CD8-positive, alpha-beta T cell (primary cell): ENCODE measurements at regions of chr1 and their contacts with region 1.

Region 1: GRCh38 chr1:40862008-40862863 is at the start of gene CITED4:
- DNase-seq: peak; percentile 93 to 97 (median 95)
- ATAC-seq: peak; percentile 97
- H3K4me3 ChIP-seq: peak within 1 kb of the TSS; percentile 63 to 78
- H3K4me3 Mint-ChIP-seq: peak within 1 kb of the TSS; percentile 95
- H3K27ac ChIP-seq: peak within 1 kb of the TSS; percentile 67 to 74
- H3K27ac Mint-ChIP-seq: peak within 1 kb of the TSS; percentile 98
- H3K4me1 ChIP-seq: peaks cover 17% of the 10 kb centered on the region
- H3K4me1 Mint-ChIP-seq: peaks cover 14% of the 10 kb centered on the region
- H3K27me3 ChIP-seq: no peaks in the 10 kb centered on the region
- H3K27me3 Mint-ChIP-seq: no peaks in the 10 kb centered on the region
- CTCF ChIP-seq: no peak
- total RNA-seq, gene CITED4: 31.4 to 34.2 TPM

Region 2: DNA sequence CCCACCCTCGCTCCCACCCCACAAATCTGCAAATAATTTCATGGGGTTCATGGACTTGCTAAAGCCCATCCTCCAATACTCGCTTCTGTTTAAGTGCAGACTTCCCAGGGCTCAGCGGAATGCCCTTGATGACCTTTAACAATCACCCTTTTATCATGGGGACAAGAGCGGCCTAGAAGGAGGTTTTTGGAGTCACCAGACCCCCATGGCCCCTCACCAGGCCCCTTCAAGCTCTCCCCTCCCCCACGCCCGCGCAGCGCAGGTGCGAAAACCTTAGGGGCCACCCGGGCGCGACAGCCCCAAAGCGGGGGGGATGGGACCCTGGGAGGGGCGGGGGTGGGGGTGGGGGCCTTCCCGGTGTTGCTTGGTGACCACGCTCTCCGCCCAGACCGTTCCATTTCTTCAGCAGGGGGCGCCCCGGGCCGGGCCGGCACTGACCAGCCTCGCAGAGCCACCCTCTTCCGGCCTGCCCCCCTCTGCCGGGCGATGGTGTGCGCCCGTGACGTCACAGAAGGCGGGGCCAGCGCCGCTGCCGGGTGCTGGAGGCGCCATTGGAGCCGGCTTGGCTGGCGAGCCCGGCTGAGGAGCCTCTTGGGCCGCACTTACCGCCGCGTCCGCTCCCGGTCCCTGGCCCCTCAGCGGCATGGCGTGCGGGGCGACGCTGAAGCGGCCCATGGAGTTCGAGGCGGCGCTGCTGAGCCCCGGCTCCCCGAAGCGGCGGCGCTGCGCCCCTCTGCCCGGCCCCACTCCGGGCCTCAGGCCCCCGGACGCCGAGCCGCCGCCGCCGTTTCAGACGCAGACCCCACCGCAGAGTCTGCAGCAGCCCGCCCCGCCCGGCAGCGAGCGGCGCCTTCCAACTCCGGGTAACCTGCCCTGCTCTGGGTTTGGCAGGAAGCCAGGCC is 1871.2 kb before region 1 on chr1 and contains the start of gene AKIRIN1:
- CTCF ChIA-PET with region 1: no interaction called
- POLR2A ChIA-PET with region 1: no interaction called
- intact Hi-C with region 1: loop called in 1 of 2 experiments (anchors 10 kb)
- DNase-seq: peak; percentile 81 to 98 (median 94)
- ATAC-seq: peak; percentile 90
- H3K4me3 ChIP-seq: peak within 1 kb of the TSS; percentile 53 to 93
- H3K4me3 Mint-ChIP-seq: peak within 1 kb of the TSS; percentile 87
- H3K27ac ChIP-seq: peak within 1 kb of the TSS; percentile 82 to 84
- H3K27ac Mint-ChIP-seq: peak within 1 kb of the TSS; percentile 89
- H3K4me1 ChIP-seq: peaks cover 40% of the 10 kb centered on the region
- H3K4me1 Mint-ChIP-seq: peaks cover 38% of the 10 kb centered on the region
- H3K27me3 ChIP-seq: no peaks in the 10 kb centered on the region
- H3K27me3 Mint-ChIP-seq: no peaks in the 10 kb centered on the region
- CTCF ChIP-seq: no peak
- total RNA-seq, gene AKIRIN1: 122 to 123 TPM

Region 3: GRCh38 chr1:40709100-40709801 is 153.0 kb before region 1 on chr1:
- CTCF ChIA-PET with region 1: no interaction called
- POLR2A ChIA-PET with region 1: no interaction called
- intact Hi-C with region 1: loop called (anchors 1 to 5 kb)
- DNase-seq: peak; percentile 43 to 94 (median 74)
- ATAC-seq: peak; percentile 95
- H3K4me3 ChIP-seq: peak overlapping the region; percentile 63
- H3K4me3 Mint-ChIP-seq: peak overlapping the region; percentile 99
- H3K27ac ChIP-seq: peak overlapping the region; percentile 67 to 94
- H3K27ac Mint-ChIP-seq: peak overlapping the region; percentile 98
- H3K4me1 ChIP-seq: peaks cover 48% of the 10 kb centered on the region
- H3K4me1 Mint-ChIP-seq: peaks cover 69% of the 10 kb centered on the region
- H3K27me3 ChIP-seq: no peaks in the 10 kb centered on the region
- H3K27me3 Mint-ChIP-seq: no peaks in the 10 kb centered on the region
- CTCF ChIP-seq: no peak

Region 4: GRCh38 chr1:40818264-40818961 is 43.8 kb before region 1 on chr1:
- CTCF ChIA-PET with region 1: no interaction called
- POLR2A ChIA-PET with region 1: interaction called, 3 read pairs
- intact Hi-C with region 1: loop called (anchors 1 kb)
- DNase-seq: peak; percentile 76 to 94 (median 88)
- ATAC-seq: peak; percentile 95
- H3K4me3 ChIP-seq: peak overlapping the region; percentile 54 to 76
- H3K4me3 Mint-ChIP-seq: peak overlapping the region; percentile 83
- H3K27ac ChIP-seq: peak overlapping the region; percentile 39 to 66
- H3K27ac Mint-ChIP-seq: peak overlapping the region; percentile 85
- H3K4me1 ChIP-seq: peaks cover 10% of the 10 kb centered on the region
- H3K4me1 Mint-ChIP-seq: peaks cover 13% of the 10 kb centered on the region
- H3K27me3 ChIP-seq: no peaks in the 10 kb centered on the region
- H3K27me3 Mint-ChIP-seq: no peaks in the 10 kb centered on the region
- CTCF ChIP-seq: no peak

Region 5: DNA sequence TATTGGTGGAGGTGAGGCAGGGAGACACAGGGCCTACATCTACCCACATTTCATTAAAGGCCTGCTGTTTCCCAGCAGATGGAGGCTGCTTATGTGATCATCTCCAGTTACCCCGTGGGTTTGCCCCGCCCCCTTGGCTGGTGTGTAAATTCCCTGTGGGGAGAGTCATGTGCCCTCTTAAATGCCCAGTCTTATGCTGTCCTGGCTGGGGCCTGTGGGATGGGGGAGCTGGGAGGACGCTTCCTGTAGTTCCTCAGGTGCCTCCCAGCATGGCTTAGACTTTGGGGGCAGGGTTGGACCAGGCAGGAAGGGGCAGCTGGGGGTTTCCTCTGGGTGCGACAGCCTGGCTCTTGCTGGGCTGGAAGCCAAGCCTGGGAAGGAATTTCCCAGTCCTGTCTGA is 15.5 kb after region 1 on chr1:
- CTCF ChIA-PET with region 1: interaction called, 4 read pairs
- POLR2A ChIA-PET with region 1: interaction called, 9 read pairs
- intact Hi-C with region 1: loop called in 1 of 2 experiments (anchors 1 kb)
- DNase-seq: peak in 2 of 9 experiments; percentile 39
- ATAC-seq: no peak
- H3K4me3 ChIP-seq: no peak overlapping the region
- H3K4me3 Mint-ChIP-seq: no peak overlapping the region
- H3K27ac ChIP-seq: no peak overlapping the region
- H3K27ac Mint-ChIP-seq: no peak overlapping the region
- H3K4me1 ChIP-seq: peaks cover 5% of the 10 kb centered on the region
- H3K4me1 Mint-ChIP-seq: peaks cover 10% of the 10 kb centered on the region
- H3K27me3 ChIP-seq: no peaks in the 10 kb centered on the region
- H3K27me3 Mint-ChIP-seq: peaks cover 11% of the 10 kb centered on the region
- CTCF ChIP-seq: no peak

Region 6: GRCh38 chr1:40979233-40980067 is 117.2 kb after region 1 on chr1 and contains the start of gene CTPS1:
- CTCF ChIA-PET with region 1: no interaction called
- POLR2A ChIA-PET with region 1: interaction called, 6 read pairs
- intact Hi-C with region 1: loop called (anchors 1 to 2 kb)
- DNase-seq: peak; percentile 92 to 98 (median 95)
- ATAC-seq: peak; percentile 81
- H3K4me3 ChIP-seq: peak within 1 kb of the TSS; percentile 83 to 91
- H3K4me3 Mint-ChIP-seq: peak within 1 kb of the TSS; percentile 95
- H3K27ac ChIP-seq: peak within 1 kb of the TSS; percentile 85 to 95
- H3K27ac Mint-ChIP-seq: peak within 1 kb of the TSS; percentile 97
- H3K4me1 ChIP-seq: peaks cover 16% of the 10 kb centered on the region
- H3K4me1 Mint-ChIP-seq: peaks cover 35% of the 10 kb centered on the region
- H3K27me3 ChIP-seq: no peaks in the 10 kb centered on the region
- H3K27me3 Mint-ChIP-seq: no peaks in the 10 kb centered on the region
- CTCF ChIP-seq: no peak
- total RNA-seq, gene CTPS1: 68.5 to 69.0 TPM